ENCODE measurements at regions of chr3 and their contacts with region 1.

Region 1: GRCh38 chr3:64533617-64534317 is 154.0 kb downstream of the ADAMTS9 start:
- DNase-seq: peak; percentile 80
- ATAC-seq: peak; percentile 97
- H3K4me3 ChIP-seq: no peak overlapping the region
- H3K27ac ChIP-seq: no peak overlapping the region
- H3K4me1 ChIP-seq: peaks cover 0 to 2% of the 10 kb centered on the region in 2 experiments; a peak in 1 of 4 replicates
- H3K27me3 ChIP-seq: peaks cover 37% of the 10 kb centered on the region; the same call in 1 of the 2 replicates
- CTCF ChIP-seq: peak; percentile 64 to 88 (median 79); a peak in 5 of 6 replicates
- POLR2A ChIP-seq: no peak
- RAD21 ChIP-seq: peak; percentile 88

Region 2: GRCh38 chr3:65170390-65171042 is 636.7 kb after region 1 on chr3:
- CTCF ChIA-PET with region 1: no interaction called
- POLR2A ChIA-PET with region 1: no interaction called
- RAD21 ChIA-PET with region 1: no interaction called
- intact Hi-C with region 1: loop called (anchors 5 kb)
- DNase-seq: no peak
- ATAC-seq: peak; percentile 62
- H3K4me3 ChIP-seq: no peak overlapping the region
- H3K27ac ChIP-seq: no peak overlapping the region
- H3K4me1 ChIP-seq: no peaks in the 10 kb centered on the region
- H3K27me3 ChIP-seq: peaks cover 12% of the 10 kb centered on the region; the same call in 1 of the 2 replicates
- CTCF ChIP-seq: peak; percentile 26 to 60 (median 38); a peak in 4 of 6 replicates
- POLR2A ChIP-seq: no peak
- RAD21 ChIP-seq: peak; percentile 45

Region 3: DNA sequence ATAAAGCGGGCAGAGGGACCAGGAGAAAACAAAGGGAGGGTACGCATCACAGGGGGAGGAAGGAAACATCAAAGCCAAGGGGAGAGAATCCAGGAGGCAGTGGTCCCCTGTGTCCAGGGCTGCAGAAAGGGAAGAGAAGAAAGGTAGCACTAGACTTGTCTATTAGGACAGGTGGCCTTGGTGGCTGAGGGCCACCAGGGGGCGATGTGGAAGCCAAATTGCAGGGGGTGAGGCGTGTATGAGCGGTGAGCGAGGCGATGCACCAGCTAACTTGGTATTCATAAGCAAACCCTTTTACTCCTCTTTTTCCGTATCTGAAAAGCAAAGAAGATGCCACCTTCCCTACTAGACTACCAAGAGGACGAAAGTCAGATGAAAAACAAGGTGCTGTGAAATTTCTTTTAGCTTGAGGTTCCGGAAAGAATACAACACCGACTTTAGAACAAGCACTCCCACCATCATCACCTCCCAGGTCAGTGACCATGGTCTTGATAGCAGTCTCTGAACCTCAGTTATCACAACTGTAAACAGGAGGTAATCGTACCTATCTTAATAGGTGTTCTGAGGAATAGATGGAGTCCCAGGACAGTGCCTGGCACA is 808.4 kb after region 1 on chr3:
- CTCF ChIA-PET with region 1: no interaction called
- POLR2A ChIA-PET with region 1: no interaction called
- RAD21 ChIA-PET with region 1: no interaction called
- intact Hi-C with region 1: loop called (anchors 5 kb)
- DNase-seq: peak; percentile 42
- ATAC-seq: peak; percentile 100
- H3K4me3 ChIP-seq: no peak overlapping the region
- H3K27ac ChIP-seq: no peak overlapping the region
- H3K4me1 ChIP-seq: no peaks in the 10 kb centered on the region
- H3K27me3 ChIP-seq: 0 out of 2 replicates have a peak, but pooled peaks cover 6% of the 10 kb centered on the region
- CTCF ChIP-seq: peak; percentile 45 to 87 (median 84); a peak in 5 of 6 replicates
- POLR2A ChIP-seq: no peak
- RAD21 ChIP-seq: peak; percentile 65

Region 4: DNA sequence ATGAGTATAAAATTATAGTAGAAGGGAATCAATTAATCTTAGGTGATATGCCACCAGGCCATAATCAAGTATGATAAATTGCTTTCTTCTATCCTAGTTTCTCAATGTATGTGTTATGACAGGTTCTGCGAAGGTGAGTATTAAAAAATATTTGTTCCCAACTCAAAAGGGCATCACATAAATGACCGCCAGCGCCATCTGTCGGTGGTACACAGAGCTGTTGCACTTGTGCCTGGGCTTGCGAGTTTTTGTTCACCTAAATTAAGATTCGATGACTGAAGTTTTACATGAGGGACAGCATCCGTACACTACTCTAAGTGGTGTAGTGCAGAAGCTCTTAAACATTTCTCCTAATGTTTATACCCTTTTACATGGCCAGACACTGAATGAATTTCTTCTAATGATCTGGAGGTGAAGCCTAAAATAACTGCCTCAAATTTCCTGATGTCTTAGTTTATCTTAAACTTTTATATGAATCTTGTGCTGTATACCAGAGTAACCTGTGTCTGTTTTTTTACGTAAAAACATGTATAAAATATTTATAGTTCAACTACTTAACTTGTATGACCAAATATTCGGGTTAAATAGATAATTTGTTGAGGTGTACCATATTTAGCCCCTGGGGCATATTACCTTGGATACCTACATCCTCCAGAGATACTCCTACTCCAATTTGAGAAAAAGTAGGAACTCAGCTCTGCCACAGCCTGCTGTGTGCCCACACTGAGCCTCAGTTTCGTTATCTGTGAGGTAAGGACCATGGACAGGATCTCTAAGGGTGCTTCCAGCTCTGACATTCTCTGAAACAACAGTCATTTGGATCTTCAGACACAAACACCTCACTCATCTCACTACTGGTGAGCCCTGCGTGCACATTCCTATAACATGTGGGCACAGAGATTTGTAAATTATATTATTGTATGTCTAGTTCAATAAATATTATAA is 1139.4 kb after region 1 on chr3:
- CTCF ChIA-PET with region 1: interaction called, 3 read pairs
- POLR2A ChIA-PET with region 1: no interaction called
- RAD21 ChIA-PET with region 1: no interaction called
- intact Hi-C with region 1: loop called (anchors 5 kb)
- DNase-seq: peak; percentile 43
- ATAC-seq: peak; percentile 77
- H3K4me3 ChIP-seq: no peak overlapping the region
- H3K27ac ChIP-seq: no peak overlapping the region
- H3K4me1 ChIP-seq: no peaks in the 10 kb centered on the region
- H3K27me3 ChIP-seq: peaks cover 3% of the 10 kb centered on the region; the same call in 1 of the 2 replicates
- CTCF ChIP-seq: peak; percentile 37 to 94 (median 79); a peak in 5 of 6 replicates
- POLR2A ChIP-seq: no peak
- RAD21 ChIP-seq: peak; percentile 56

Region 5: DNA sequence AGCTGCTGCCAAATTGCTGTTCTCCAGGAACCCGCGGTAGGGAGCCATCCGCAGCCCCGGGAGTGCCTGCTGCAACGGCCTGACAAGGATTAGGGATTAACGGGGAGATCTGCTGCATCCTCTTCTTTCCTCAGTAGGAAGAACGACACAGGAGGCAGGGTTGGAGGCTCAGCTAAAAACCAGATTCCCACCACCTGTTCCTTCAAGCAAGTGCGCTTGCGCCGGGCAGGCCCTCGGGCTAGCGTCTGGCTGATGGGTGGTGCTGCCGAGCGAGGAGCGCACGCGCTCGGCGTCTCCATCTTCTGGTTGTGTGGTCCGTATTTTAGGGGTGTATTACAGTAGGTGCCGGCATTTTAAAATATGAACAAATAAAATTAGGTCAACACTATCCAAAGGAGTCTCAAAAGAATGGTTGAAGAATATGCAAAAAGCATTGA is 1661.6 kb after region 1 on chr3:
- CTCF ChIA-PET with region 1: interaction called, 6 read pairs
- POLR2A ChIA-PET with region 1: no interaction called
- RAD21 ChIA-PET with region 1: no interaction called
- intact Hi-C with region 1: loop called (anchors 1 kb)
- DNase-seq: peak; percentile 62
- ATAC-seq: peak; percentile 96
- H3K4me3 ChIP-seq: peak overlapping the region; percentile 29 to 39
- H3K27ac ChIP-seq: no peak overlapping the region
- H3K4me1 ChIP-seq: peaks cover 0 to 14% of the 10 kb centered on the region in 2 experiments; a peak in 2 of 4 replicates
- H3K27me3 ChIP-seq: no peaks in the 10 kb centered on the region
- CTCF ChIP-seq: peak; percentile 34 to 46 (median 36); a peak in 3 of 6 replicates
- POLR2A ChIP-seq: no peak
- RAD21 ChIP-seq: peak; percentile 61